Activated naive CD4-positive, alpha-beta T cell treated with anti-CD3 and anti-CD28 coated beads, Interleukin-2, amount 10 ng/mL, durations not matched to agents 7 days and 5 days (primary cell): ENCODE measurements at regions of chr16 and their contacts with region 1.

Region 1: DNA sequence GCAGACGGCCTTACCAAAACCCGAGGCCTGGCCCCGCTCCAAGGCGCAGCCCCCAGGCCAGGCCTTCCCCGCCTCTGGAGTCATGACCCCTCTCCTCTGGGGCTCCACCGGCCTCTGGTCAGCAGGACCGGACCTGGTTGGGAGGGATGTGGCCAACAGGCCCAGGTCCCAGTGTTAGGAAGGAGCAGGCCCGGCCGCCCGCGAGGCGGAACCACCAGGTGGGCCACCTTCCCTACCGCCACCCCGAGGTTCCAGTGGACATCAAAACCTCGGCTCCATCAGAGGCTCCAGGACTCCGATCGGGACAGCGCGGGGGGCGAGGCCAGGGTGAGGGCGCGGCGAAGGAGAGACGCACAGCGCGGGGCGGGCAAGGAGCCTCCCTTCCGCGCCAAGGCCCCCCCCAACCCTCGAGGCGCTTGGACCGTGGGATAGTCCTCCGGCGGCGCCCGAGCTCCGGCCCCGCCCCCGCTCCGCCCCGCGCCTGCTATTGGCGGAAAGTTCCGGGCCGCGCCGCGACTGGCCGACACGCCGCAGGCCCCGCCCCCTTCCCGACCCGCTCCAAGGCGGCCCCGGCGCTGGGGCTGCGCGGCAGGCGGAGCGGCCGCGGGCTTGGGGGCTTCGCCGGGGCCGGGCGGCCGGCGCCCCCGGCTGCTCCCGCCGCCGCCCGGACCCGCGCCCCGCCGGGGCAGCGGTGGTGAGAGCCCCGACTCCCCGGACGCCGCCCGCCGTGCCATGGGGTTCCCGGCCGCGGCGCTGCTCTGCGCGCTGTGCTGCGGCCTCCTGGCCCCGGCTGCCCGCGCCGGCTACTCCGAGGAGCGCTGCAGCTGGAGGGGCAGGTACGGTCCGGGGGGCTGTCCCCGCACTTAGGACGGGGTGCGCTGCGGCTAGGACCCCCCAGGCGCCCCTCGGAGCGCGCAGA is at the start of gene METRN:
- DNase-seq: peak; percentile 93
- H3K4me3 Mint-ChIP-seq: peak within 1 kb of the TSS; percentile 61
- H3K27ac Mint-ChIP-seq: no peak within 1 kb of the TSS
- H3K4me1 Mint-ChIP-seq: peaks cover 19% of the 10 kb centered on the region
- H3K27me3 Mint-ChIP-seq: peaks cover 87% of the 10 kb centered on the region

Region 2: DNA sequence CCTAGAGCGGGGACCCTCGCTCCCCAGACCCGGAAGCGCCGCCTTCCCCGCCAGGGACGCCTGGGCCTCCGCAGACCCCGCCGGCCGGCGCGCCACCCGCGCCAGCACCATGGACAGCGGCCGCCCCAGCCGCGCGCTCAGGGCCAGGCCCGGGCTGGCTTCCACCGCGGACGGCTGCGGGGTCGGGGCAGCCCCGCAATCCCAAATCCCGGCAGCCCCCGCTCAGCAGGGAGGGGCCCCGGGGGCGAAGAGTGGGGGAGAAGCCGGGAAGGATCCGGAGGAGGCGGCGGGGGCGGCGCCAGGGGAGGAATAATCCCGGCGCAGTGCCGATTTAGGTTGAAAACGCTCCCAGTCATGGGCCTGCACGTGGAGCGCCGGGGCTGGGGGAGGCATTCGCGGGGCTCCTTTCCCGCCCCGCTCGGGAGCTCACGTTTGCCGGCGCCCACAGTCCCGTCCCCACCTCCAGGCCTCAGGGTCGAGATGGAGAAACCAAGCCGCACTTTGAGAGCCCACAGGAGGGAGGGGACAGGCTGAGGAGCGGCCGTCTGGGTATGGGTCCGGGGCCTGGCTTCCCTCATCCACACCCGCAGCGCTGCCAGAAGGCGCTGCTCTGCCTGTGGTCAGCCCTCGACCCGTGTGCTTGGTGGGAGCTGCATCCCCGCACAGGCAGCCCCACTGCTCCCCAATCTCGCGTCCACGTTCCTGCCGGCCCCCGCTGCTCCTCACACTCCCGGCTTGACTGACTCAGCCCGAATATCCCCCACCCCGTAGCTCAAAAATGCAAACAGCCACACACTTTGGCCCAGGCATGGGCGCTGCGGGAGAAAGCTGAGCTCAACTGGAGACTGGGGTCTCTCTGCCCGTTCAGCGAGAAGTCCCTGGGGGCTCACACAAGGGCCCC is 13.9 kb before region 1 on chr16:
- CTCF ChIA-PET with region 1: interaction called, 15 read pairs
- DNase-seq: peak; percentile 65
- H3K4me3 Mint-ChIP-seq: no peak overlapping the region
- H3K27ac Mint-ChIP-seq: no peak overlapping the region
- H3K4me1 Mint-ChIP-seq: peaks cover 24% of the 10 kb centered on the region
- H3K27me3 Mint-ChIP-seq: peaks cover 78% of the 10 kb centered on the region

Region 3: DNA sequence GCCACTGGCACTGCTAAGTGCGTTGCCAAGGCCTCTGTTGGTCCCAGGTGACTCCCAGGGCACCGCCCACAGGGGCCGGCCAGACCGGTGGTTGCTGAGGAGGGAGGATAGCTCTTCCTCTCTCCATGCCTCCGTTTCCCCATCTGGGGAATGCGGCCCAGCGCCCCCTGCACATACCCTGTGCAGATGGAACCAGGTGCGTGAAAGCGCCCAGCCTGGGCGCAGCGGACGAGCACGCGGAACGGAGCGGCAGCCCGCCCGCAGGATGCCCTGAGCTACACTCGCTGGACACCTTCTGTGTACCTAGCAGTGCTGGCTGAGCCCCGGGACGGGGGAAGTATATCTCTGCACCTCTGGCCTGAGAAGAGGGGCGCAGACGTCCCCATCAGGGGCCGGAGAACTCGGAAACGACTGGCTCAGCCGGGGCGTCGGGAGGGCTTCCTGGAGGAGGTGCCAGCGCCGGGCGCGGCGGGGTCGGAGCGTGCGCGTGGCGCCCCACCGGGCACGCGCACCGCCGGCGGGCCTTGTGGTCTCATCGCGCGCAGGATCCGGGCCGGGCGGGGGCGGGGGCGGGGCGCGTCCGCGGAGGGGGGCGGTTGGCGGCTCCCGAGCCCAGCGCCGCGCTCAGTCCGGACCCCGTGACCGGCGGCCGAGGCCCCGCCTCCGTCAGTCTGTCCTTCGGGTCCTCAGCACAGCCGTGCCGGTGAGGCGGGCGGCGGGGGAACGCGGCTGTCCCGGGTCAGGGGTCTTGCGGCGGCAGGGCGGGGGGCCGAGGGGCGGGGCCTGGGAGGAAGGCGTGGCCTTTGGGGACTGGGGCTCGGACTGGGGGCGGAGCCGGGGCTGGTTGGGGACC is 11.8 kb after region 1 on chr16 and contains the starts of genes CCDC78 and HAGHL:
- CTCF ChIA-PET with region 1: interaction called, 11 read pairs
- DNase-seq: peak; percentile 79
- H3K4me3 Mint-ChIP-seq: peak within 1 kb of the TSS; percentile 70
- H3K27ac Mint-ChIP-seq: no peak within 1 kb of the TSS
- H3K4me1 Mint-ChIP-seq: peaks cover 7% of the 10 kb centered on the region
- H3K27me3 Mint-ChIP-seq: peaks cover 43% of the 10 kb centered on the region

Region 4: GRCh38 chr16:732936-733335 is 18.1 kb after region 1 on chr16:
- CTCF ChIA-PET with region 1: interaction called, 11 read pairs
- DNase-seq: no peak
- H3K4me3 Mint-ChIP-seq: no peak overlapping the region
- H3K27ac Mint-ChIP-seq: no peak overlapping the region
- H3K4me1 Mint-ChIP-seq: peaks cover 16% of the 10 kb centered on the region
- H3K27me3 Mint-ChIP-seq: no peaks in the 10 kb centered on the region

Region 5: DNA sequence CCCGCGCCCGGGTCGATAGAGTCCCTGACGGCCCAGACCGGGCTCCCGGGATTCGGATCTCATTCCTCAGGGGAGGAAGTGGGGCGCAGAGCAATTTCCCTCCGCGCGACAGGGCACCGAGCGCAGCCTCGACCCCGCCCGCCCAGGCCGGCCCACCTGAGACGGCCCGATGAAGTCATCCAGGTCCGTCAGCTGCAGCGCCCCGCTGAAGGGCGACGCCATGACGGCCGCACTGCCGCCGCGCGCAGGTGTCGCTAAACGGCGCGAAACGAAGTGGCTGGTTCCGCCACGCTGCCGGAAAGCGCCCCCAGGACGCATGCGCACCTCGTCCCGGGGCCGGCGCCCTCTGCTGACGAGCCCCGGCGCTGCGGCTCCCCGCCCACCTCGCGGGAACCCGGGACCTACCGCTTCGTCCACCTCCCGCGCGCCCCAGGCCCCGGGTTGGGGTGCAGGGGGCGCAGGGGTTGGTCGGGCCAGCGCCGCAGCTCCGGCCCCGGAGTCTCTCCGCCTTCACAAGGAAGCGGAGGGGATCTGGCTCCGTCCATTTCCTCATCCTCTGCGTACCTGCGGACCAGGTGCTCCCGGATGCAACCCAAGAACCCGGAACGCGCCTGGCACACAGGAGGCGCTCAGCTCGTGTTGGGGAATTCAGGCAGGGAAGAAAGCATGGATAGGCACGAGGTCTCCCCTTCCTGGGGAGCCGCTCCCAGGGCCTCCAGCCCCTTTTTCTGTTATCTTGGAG is 26.1 kb after region 1 on chr16 and contains the start of gene CIAO3:
- CTCF ChIA-PET with region 1: interaction called, 11 read pairs
- DNase-seq: peak; percentile 92
- H3K4me3 Mint-ChIP-seq: peak within 1 kb of the TSS; percentile 79
- H3K27ac Mint-ChIP-seq: peak within 1 kb of the TSS; percentile 65
- H3K4me1 Mint-ChIP-seq: peaks cover 20% of the 10 kb centered on the region
- H3K27me3 Mint-ChIP-seq: no peaks in the 10 kb centered on the region

Region 6: DNA sequence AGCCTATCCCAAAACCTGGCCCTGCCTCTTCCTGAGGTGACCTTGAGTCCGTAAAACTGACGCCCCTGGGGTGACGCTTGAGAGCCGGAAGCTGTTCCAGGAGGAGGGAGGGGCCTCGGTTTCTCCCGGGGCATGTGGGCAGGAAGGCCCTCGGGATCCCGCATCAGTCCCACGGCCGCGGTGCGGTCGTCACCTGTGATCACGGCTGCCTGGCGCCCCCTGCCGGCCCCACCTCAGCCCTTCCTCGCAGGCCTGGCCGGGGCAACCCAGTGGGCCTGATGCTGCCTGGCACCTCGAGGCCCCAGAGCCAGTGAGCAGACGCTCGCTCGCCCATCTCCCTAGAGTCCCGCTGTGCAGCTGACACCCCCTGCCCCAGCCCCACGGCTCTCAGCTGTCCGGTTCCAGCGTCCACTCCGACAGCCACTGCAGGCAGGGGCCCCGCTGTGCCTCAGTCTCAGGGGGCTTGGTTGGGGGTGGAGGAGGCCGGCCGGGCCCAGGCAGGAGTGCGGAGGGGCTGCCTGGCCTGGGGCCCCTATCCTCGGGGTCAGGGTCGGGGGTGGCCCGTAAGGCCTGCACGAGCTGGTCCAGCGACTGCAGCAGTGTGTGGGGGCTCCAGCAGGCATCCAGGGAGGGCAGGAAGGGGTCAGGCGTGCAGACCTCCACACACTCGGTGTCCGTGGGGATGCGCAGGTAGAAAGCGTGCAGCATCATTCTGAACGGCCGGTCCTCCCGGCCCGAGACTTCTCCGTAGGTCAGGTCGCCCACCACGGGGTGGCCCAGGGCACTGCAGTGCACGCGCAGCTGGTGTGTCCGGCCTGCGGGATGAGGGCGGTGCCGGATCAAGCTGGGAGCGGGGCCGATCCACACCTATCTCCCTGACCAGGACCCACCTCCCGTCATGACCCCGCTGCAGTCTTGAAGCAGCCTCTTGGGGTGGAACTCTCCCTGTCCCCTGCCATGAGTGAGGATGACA is 71.0 kb after region 1 on chr16:
- CTCF ChIA-PET with region 1: interaction called, 94 read pairs
- DNase-seq: peak; percentile 83
- H3K4me3 Mint-ChIP-seq: peak overlapping the region; percentile 87
- H3K27ac Mint-ChIP-seq: no peak overlapping the region
- H3K4me1 Mint-ChIP-seq: peaks cover 14% of the 10 kb centered on the region
- H3K27me3 Mint-ChIP-seq: no peaks in the 10 kb centered on the region

Region 7: DNA sequence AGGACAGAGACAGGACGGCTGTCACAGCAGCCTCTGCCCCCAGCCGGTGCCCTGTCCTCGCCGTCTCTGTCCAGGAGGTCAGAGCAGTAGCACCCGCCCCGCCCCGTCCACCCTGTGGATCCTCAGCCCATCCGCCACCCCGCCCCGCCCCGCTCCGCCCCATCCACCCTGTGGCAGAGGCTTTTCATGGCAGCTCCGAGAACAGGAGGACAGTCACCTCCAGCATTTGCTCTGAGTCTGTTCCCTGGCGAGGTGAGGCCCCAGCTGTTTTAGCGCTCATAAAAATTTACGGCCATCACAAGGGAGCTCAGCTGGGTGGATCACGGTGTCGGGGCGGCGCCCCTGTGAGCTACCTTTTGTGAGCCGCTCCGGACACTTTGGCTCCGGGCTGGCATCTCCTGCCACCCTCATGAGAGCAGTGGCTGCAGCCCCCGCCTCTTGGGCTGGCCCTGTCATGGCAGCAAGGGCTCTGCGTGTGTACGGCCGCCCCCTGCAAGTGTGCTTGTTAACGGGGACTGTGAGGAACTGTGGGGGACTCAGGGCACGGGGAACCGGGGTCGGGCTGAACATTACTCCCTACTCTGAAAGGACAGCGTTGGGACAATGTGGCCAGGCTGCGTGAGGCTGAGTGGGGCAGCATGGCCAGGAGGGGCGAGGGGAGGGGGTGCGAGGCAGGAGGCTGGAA is 118.0 kb after region 1 on chr16:
- CTCF ChIA-PET with region 1: no interaction called
- DNase-seq: no peak
- H3K4me3 Mint-ChIP-seq: no peak overlapping the region
- H3K27ac Mint-ChIP-seq: no peak overlapping the region
- H3K4me1 Mint-ChIP-seq: no peaks in the 10 kb centered on the region
- H3K27me3 Mint-ChIP-seq: peaks cover 6% of the 10 kb centered on the region